WTC11 (cell line): ENCODE measurements at regions of chr4 and their contacts with region 1.

Region 1: DNA sequence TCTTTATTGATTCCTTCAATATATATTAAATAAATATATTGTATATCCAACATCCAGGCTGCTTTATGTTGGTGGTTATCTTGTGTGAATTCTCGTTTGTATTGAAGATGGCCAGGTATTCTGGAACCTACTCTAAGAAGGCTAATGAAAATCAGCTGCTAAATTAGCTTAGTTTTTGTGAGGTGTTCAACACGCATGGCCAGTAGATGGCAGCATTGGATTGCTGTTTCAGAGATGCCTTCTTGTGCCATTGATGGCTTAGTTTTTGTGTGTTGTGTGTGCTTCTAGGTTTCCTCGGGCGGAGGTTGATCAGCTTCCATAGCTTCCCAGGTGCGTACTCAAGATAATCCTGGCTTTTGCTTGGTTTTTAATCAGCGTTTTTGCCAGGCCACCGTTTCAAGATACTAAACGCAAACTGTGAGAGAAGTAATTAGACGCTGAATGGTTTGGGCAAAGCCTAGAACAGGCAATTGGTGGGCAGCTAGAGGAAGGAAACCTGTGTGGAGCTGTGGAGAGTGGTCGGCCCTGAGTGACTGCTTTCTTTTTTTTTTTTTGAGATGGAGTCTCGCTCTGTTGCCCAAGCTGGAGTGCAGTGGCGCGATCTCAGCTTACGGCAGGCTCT is 15.1 kb downstream of the NOCT start:
- DNase-seq: peak; percentile 75
- ATAC-seq: peak; percentile 72
- H3K4me3 Mint-ChIP-seq: peak overlapping the region; percentile 28; the same call in 1 of the 2 replicates
- H3K27ac Mint-ChIP-seq: peak overlapping the region; percentile 82
- H3K4me1 Mint-ChIP-seq: peaks cover 50% of the 10 kb centered on the region
- H3K27me3 Mint-ChIP-seq: no peaks in the 10 kb centered on the region
- CTCF ChIP-seq: peak; percentile 62; the same call in 1 of the 2 replicates

Region 2: GRCh38 chr4:138972956-138973801 is 57.5 kb before region 1 on chr4:
- CTCF ChIA-PET with region 1: interaction called, 26 read pairs
- POLR2A ChIA-PET with region 1: no interaction called
- DNase-seq: no peak
- ATAC-seq: peak; percentile 16
- H3K4me3 Mint-ChIP-seq: peak overlapping the region; percentile 43
- H3K27ac Mint-ChIP-seq: peak overlapping the region; percentile 97
- H3K4me1 Mint-ChIP-seq: peaks cover 57% of the 10 kb centered on the region
- H3K27me3 Mint-ChIP-seq: no peaks in the 10 kb centered on the region
- CTCF ChIP-seq: no peak

Region 3: GRCh38 chr4:139015269-139015947 is 15.3 kb before region 1 on chr4 and contains the start of gene NOCT:
- CTCF ChIA-PET with region 1: interaction called, 47 read pairs
- POLR2A ChIA-PET with region 1: no interaction called
- DNase-seq: peak; percentile 90
- ATAC-seq: peak; percentile 82
- H3K4me3 Mint-ChIP-seq: peak within 1 kb of the TSS; percentile 93
- H3K27ac Mint-ChIP-seq: peak within 1 kb of the TSS; percentile 95
- H3K4me1 Mint-ChIP-seq: peaks cover 54% of the 10 kb centered on the region
- H3K27me3 Mint-ChIP-seq: no peaks in the 10 kb centered on the region
- CTCF ChIP-seq: no peak
- total RNA-seq, gene NOCT: 37.9 to 43.4 TPM (median 39.2 TPM) in 3 replicates

Region 4: DNA sequence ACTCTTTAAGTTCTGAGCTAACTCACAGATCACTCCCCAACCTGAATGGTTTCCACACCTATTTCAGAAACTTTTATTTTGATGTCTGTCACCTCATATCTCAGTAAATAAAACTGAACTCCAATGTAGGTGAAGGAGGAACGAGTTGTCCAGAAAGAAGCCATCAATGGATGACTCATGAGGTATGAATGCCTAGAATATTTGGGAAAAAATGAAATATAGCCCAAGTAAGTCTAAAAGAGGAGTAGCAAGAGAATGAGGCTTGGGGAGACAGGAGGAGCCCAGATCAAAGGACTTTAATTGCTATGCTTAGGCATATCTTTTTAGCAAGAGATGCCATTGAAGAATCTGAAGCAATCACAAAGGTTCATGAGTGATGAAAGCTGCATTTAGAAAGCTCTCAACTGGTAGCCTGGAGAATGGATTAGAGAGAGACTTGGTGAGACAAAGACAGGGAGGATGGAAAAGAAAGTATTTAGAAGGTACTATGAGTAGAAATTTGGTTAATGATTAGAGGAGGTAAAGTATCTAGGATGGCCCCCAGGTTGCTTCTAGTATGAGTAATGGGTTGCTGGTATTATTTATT is 24.2 kb after region 1 on chr4:
- CTCF ChIA-PET with region 1: interaction called, 27 read pairs
- POLR2A ChIA-PET with region 1: no interaction called
- DNase-seq: no peak
- ATAC-seq: no peak
- H3K4me3 Mint-ChIP-seq: no peak overlapping the region
- H3K27ac Mint-ChIP-seq: peak overlapping the region; percentile 6; the same call in 1 of the 2 replicates
- H3K4me1 Mint-ChIP-seq: peaks cover 5% of the 10 kb centered on the region
- H3K27me3 Mint-ChIP-seq: no peaks in the 10 kb centered on the region
- CTCF ChIP-seq: no peak

Region 5: DNA sequence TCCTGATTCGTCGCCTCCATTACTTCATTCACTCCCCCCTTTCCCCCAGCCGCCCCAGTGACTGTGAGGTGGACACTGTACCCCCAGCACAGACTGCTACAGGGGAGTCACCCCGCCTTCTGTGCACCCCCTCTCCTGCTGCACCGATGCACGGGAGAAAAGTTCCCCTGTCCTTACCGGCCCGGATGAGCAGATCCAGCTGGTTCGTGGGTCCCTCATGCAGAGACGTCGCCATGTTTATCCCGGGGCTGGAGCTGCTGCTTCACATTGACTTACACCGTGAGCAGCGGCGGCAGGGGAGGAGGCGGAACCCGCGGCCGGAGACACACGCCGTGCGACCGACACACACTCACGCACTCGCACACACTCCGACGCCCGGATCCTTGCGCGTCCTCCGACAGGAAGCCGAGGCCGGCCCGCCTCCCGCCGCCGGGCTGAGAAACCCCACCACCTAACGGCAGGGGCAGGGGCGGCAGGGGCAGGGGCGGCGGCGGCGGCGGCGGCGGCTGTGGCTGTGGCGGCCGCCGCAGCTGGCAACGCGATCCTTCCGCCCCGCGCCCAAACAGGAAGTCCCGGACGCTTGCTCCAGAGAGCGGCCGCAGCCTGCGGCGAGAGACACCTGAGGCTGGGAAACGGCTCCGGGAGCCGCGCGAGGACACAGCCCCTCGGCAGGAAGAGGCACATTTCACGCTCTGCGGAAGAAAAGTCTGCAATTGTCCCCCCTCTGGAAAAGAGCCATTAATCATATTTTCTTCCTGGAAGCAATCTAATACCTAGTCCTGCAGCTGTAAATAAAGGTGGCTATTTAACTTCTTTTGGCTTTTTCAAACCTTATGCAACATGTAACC is 53.5 kb after region 1 on chr4:
- CTCF ChIA-PET with region 1: interaction called, 13 read pairs
- POLR2A ChIA-PET with region 1: no interaction called
- DNase-seq: peak; percentile 90
- ATAC-seq: peak; percentile 63
- H3K4me3 Mint-ChIP-seq: peak overlapping the region; percentile 96
- H3K27ac Mint-ChIP-seq: peak overlapping the region; percentile 99
- H3K4me1 Mint-ChIP-seq: peaks cover 30% of the 10 kb centered on the region
- H3K27me3 Mint-ChIP-seq: no peaks in the 10 kb centered on the region; the same call in 1 of the 2 replicates
- CTCF ChIP-seq: no peak

Region 6: GRCh38 chr4:139279760-139280620 is 249.3 kb after region 1 on chr4 and contains the start of gene MGARP:
- CTCF ChIA-PET with region 1: interaction called, 10 read pairs
- POLR2A ChIA-PET with region 1: no interaction called
- DNase-seq: peak; percentile 83
- ATAC-seq: peak; percentile 89
- H3K4me3 Mint-ChIP-seq: peak within 1 kb of the TSS; percentile 79
- H3K27ac Mint-ChIP-seq: no peak within 1 kb of the TSS
- H3K4me1 Mint-ChIP-seq: peaks cover 18% of the 10 kb centered on the region
- H3K27me3 Mint-ChIP-seq: peaks cover 55% of the 10 kb centered on the region
- CTCF ChIP-seq: no peak
- total RNA-seq, gene MGARP: 4.6 to 7.5 TPM (median 6.2 TPM) in 3 replicates

Region 7: DNA sequence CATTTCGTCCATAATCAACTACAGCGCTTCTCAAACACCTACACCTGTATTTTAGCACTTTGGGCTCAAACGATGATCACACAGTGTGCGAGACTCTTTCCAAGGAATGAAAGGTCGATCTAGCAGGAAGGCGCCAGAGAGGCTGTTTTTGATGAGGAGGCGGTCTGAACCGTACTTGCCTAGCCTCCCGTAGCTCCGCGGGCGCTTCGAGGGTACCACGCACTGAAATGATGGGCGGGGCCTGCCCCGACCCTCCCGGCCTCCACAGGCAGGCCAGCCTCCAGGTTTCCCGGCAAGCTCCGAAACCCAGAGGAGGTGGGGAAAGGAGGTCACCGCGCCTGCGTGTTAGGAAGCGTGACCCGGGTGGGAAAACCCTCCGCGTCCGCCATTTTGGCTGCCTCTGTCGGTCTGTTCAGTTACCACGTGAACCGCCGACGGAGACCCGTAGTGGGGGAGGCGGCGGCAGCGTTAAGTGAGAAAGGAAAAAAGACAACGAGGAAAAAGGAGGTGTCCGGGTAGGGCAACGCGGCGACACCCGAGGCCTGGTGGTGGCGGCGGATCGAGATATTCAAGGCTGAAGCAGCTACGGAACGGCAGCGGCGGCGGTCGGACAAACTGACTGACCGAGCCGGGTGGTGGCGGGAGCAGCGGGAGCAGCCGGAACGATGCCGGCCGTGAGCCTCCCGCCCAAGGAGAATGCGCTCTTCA is 270.5 kb after region 1 on chr4 and contains the start of gene NAA15:
- CTCF ChIA-PET with region 1: interaction called, 45 read pairs
- POLR2A ChIA-PET with region 1: interaction called, 5 read pairs
- DNase-seq: peak; percentile 97
- ATAC-seq: peak; percentile 97
- H3K4me3 Mint-ChIP-seq: peak within 1 kb of the TSS; percentile 99
- H3K27ac Mint-ChIP-seq: peak within 1 kb of the TSS; percentile 99
- H3K4me1 Mint-ChIP-seq: peaks cover 35% of the 10 kb centered on the region
- H3K27me3 Mint-ChIP-seq: peaks cover 2% of the 10 kb centered on the region; the same call in 1 of the 2 replicates
- CTCF ChIP-seq: no peak
- total RNA-seq, gene NAA15: 81.4 to 98.9 TPM (median 81.6 TPM) in 3 replicates